ENCODE measurements at regions of chr10 and their contacts with region 1.

Region 1: GRCh38 chr10:89029785-89030437 is 39.3 kb downstream of the FAS start:
- DNase-seq: peak; percentile 74 to 87 (median 77)
- H3K4me3 ChIP-seq: no peak overlapping the region
- H3K27ac ChIP-seq: peak overlapping the region in 1 of 2 donors; percentile 32
- H3K4me1 ChIP-seq: no peaks in the 10 kb centered on the region
- H3K27me3 ChIP-seq: no peaks in the 10 kb centered on the region
- CTCF ChIP-seq: peak; percentile 55 to 93 (median 93)
- EP300 ChIP-seq: no peak
- POLR2A ChIP-seq: no peak

Region 2: DNA sequence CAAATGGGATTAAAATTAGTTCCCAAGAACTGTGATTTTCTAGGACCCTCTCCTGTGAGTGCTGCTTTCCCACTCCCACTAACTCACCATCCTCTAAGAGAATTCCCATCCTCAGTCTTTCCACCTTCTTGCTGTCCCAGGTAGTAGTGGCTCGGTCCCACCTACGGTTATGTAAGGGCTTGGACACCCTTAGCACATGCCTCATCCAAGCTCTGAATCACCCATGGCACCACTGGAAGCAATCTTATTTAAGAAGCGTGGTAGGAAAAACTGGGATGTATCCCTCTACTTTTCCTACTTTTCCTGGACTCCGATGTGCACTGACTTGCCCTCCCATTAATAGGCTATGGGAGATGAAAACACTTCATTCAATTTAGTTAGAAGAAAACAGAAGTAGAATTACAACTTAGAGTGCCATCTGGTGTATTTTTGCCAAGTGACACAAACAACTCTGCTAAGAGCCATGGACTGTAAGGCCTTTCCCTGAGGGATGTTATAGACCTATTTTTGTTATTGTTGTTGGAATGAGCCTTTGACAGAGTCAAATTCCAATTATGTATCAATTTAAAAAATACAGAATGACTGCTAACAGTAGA is 164.5 kb before region 1 on chr10:
- intact Hi-C with region 1: no loop called
- DNase-seq: no peak
- H3K4me3 ChIP-seq: no peak overlapping the region
- H3K27ac ChIP-seq: no peak overlapping the region
- H3K4me1 ChIP-seq: no peaks in the 10 kb centered on the region
- H3K27me3 ChIP-seq: no peaks in the 10 kb centered on the region
- CTCF ChIP-seq: no peak
- EP300 ChIP-seq: no peak
- POLR2A ChIP-seq: no peak

Region 3: GRCh38 chr10:89217057-89217990 is 187.4 kb after region 1 on chr10:
- intact Hi-C with region 1: loop called (anchors 1 to 10 kb)
- DNase-seq: peak; percentile 33 to 75 (median 62)
- H3K4me3 ChIP-seq: no peak overlapping the region
- H3K27ac ChIP-seq: peak overlapping the region in 1 of 2 donors; percentile 53
- H3K4me1 ChIP-seq: peaks cover 2% of the 10 kb centered on the region
- H3K27me3 ChIP-seq: no peaks in the 10 kb centered on the region
- CTCF ChIP-seq: peak; percentile 61 to 86 (median 78)
- EP300 ChIP-seq: no peak
- POLR2A ChIP-seq: no peak